T-cell (primary cell): ENCODE measurements at regions of chr6 and their contacts with region 1.

Region 1: DNA sequence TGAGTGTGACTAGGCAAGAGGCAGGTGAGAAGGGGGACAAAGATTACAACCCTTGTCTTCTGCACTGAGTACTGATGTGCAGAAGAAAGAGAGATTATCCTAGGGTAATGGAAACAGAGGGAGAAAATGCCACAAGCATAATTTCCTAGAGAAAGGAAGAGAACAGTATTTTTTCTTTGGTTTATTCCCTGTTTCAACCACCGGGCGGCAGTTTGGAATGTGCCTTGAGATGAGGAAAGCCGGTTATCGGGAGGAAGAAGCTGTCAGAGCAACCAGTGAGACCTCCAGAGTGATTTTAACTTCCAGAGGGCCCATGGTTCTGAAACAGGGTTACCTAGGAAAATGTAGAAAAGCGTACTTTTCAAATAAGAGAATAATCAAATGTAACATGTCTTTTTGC is 121.4 kb downstream of the REV3L start:
- DNase-seq: peak in 2 of 35 experiments; percentile 2 to 24
- ATAC-seq: no peak
- H3K4me3 ChIP-seq: no peak overlapping the region
- H3K4me3 Mint-ChIP-seq: no peak overlapping the region
- H3K27ac ChIP-seq: no peak overlapping the region
- H3K27ac Mint-ChIP-seq: no peak overlapping the region
- H3K4me1 ChIP-seq: no peaks in the 10 kb centered on the region
- H3K4me1 Mint-ChIP-seq: no peaks in the 10 kb centered on the region
- H3K27me3 ChIP-seq: no peaks in the 10 kb centered on the region
- H3K27me3 Mint-ChIP-seq: no peaks in the 10 kb centered on the region

Region 2: GRCh38 chr6:111527367-111527766 is 165.7 kb after region 1 on chr6:
- CTCF ChIA-PET with region 1: interaction called in 1 of 2 experiments, 12 read pairs
- POLR2A ChIA-PET with region 1: no interaction called
- DNase-seq: no peak
- ATAC-seq: no peak
- H3K4me3 ChIP-seq: no peak overlapping the region
- H3K4me3 Mint-ChIP-seq: no peak overlapping the region
- H3K27ac ChIP-seq: no peak overlapping the region
- H3K27ac Mint-ChIP-seq: no peak overlapping the region
- H3K4me1 ChIP-seq: peaks cover 3 to 8% of the 10 kb centered on the region in 2 experiments
- H3K4me1 Mint-ChIP-seq: peaks cover 17 to 29% (median 23%) of the 10 kb centered on the region in 3 donors
- H3K27me3 ChIP-seq: no peaks in the 10 kb centered on the region
- H3K27me3 Mint-ChIP-seq: no peaks in the 10 kb centered on the region